ENCODE measurements at regions of chr17 and their contacts with region 1.

Region 1: GRCh38 chr17:68539548-68540467 is 27.6 kb downstream of the PRKAR1A start:
- DNase-seq: no peak
- ATAC-seq: no peak
- H3K4me3 ChIP-seq: no peak overlapping the region
- H3K4me3 Mint-ChIP-seq: no peak overlapping the region
- H3K27ac ChIP-seq: no peak overlapping the region
- H3K27ac Mint-ChIP-seq: peak overlapping the region; percentile 18
- H3K4me1 ChIP-seq: no peaks in the 10 kb centered on the region
- H3K4me1 Mint-ChIP-seq: no peaks in the 10 kb centered on the region
- H3K27me3 ChIP-seq: no peaks in the 10 kb centered on the region
- H3K27me3 Mint-ChIP-seq: no peaks in the 10 kb centered on the region
- CTCF ChIP-seq: no peak

Region 2: DNA sequence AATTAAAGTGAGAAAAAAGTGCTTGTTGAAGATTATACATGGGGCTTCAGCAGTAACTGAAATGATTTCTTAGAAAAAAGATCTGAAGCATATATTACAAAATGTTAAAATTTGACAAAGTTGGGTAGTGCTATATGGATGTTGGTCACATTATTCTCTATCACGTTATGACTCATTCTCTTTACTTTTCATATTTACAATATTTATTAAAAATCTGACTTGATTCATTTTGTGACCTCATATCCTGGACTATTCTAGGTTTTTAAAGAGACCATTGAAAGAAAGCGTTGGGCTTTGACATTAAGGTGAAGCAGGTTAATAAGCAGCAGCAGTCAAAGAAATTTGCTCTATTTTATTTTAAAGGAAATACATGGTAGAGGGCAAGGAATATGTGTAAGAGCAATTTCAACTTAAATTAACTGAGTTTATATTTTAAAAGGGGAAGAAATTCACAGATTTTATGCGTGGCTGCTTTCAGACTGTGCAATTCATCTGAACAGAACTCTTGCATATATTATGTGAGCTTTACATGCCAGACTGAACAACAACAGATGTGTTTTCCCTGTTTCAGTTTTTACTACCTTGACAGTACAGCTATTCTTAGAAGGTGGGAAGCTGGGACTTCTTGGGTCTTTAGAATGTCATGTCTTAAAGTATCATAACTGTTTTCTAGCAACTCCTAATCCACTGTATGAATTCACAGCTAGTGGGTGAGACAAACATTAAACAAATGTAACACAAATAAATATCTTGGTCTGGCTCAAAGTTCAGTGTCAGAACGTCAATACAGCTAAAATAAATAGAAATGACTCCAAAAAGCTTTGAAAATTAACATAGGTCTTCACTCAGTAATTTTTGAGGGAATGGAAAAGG is 71.8 kb after region 1 on chr17:
- CTCF ChIA-PET with region 1: no interaction called
- POLR2A ChIA-PET with region 1: no interaction called
- intact Hi-C with region 1: no loop called
- DNase-seq: no peak
- ATAC-seq: no peak
- H3K4me3 ChIP-seq: no peak overlapping the region
- H3K4me3 Mint-ChIP-seq: no peak overlapping the region
- H3K27ac ChIP-seq: no peak overlapping the region
- H3K27ac Mint-ChIP-seq: no peak overlapping the region
- H3K4me1 ChIP-seq: no peaks in the 10 kb centered on the region
- H3K4me1 Mint-ChIP-seq: no peaks in the 10 kb centered on the region
- H3K27me3 ChIP-seq: no peaks in the 10 kb centered on the region
- H3K27me3 Mint-ChIP-seq: peaks cover 17% of the 10 kb centered on the region
- CTCF ChIP-seq: no peak

Region 3: DNA sequence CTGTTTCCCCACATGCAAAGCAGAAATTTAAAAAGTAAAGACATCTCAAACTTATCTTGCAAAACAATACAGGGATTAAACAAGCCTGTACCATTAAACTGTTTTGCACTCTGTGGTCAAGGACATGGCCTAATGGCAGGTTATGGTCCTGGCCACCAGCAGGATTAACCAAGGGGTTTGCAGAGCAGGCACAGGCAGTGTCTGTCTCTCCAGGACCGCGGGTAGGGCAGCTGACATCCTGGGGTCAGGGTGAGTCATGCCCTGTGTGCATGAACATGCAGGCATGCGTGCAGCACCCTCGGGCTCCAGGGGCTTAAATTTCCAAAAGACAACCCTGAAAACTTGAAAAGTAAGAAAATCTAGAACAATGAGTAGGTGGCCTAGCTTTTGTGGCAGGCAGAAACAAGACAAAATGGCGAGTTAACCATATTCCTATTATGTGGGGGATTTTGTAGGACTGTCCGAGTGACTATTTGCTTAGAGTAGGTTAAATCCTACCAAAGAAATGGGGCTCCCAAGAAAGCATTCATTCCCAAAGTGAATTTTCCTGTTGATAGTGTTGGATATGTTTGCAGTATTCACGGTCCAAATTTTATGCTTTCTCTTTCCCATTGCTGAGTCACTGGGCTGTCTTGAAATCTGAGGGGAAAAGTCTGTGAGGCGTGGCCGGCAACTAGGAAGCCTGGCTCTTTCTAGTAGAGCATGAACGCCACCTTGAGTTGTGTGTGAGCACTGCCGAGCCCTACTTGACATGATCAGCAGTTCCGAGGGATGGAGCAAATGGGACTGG is 219.7 kb after region 1 on chr17:
- CTCF ChIA-PET with region 1: no interaction called
- POLR2A ChIA-PET with region 1: no interaction called
- intact Hi-C with region 1: loop called in 1 of 2 experiments (anchors 10 kb)
- DNase-seq: peak in 8 of 9 experiments; percentile 2 to 51 (median 20)
- ATAC-seq: peak; percentile 29
- H3K4me3 ChIP-seq: no peak overlapping the region
- H3K4me3 Mint-ChIP-seq: no peak overlapping the region
- H3K27ac ChIP-seq: no peak overlapping the region
- H3K27ac Mint-ChIP-seq: no peak overlapping the region
- H3K4me1 ChIP-seq: no peaks in the 10 kb centered on the region
- H3K4me1 Mint-ChIP-seq: peaks cover 9% of the 10 kb centered on the region
- H3K27me3 ChIP-seq: no peaks in the 10 kb centered on the region
- H3K27me3 Mint-ChIP-seq: no peaks in the 10 kb centered on the region
- CTCF ChIP-seq: no peak

Region 4: DNA sequence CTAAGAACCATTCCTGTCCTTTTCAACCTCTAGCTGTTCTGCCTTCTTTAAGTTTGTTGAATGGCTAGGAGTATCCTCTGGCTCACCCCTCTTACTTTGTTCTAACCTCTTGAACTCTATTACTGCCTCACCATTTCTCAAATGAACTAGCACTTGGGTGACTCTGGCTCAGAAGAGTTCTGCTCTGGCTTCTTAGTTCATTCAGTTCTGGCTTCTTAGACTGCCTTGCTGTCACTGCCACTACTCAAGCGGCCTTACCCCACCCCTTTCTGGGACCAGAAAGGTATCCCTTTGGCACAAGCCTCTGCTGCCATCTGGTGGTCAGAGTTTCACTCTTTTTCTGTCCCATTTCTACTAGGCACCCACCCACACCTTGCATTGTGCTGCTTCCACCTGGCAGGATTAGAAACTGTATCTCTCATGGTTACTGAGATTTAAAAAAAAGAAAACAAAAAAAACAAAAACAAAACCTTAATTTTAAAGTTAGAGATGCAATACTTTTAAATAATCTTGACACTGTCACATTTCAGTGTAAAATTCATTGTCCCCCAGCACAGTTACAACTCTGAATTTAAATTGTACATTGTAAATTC is 695.6 kb after region 1 on chr17:
- CTCF ChIA-PET with region 1: no interaction called
- POLR2A ChIA-PET with region 1: no interaction called
- intact Hi-C with region 1: loop called in 1 of 2 experiments (anchors 5 kb)
- DNase-seq: peak; percentile 21 to 71 (median 57)
- ATAC-seq: peak; percentile 72
- H3K4me3 ChIP-seq: no peak overlapping the region
- H3K4me3 Mint-ChIP-seq: no peak overlapping the region
- H3K27ac ChIP-seq: no peak overlapping the region
- H3K27ac Mint-ChIP-seq: no peak overlapping the region
- H3K4me1 ChIP-seq: no peaks in the 10 kb centered on the region
- H3K4me1 Mint-ChIP-seq: no peaks in the 10 kb centered on the region
- H3K27me3 ChIP-seq: no peaks in the 10 kb centered on the region
- H3K27me3 Mint-ChIP-seq: no peaks in the 10 kb centered on the region
- CTCF ChIP-seq: peak; percentile 49

Measured in CD8-positive, alpha-beta T cell (primary cell).